OCI-LY7 (cell line): ENCODE measurements at regions of chr19 and their contacts with region 1.

Region 1: GRCh38 chr19:4791170-4792018 is at the start of gene FEM1A:
- DNase-seq: peak; percentile 100
- H3K4me3 ChIP-seq: peak within 1 kb of the TSS; percentile 84
- H3K27ac ChIP-seq: peak within 1 kb of the TSS; percentile 50
- H3K4me1 ChIP-seq: peaks cover 39% of the 10 kb centered on the region
- CTCF ChIP-seq: peak; percentile 99
- total RNA-seq, gene FEM1A: 11.5 and 17.5 TPM in 2 replicates

Region 2: GRCh38 chr19:4400135-4400936 is 391.1 kb before region 1 on chr19 and contains the start of gene SH3GL1:
- CTCF ChIA-PET with region 1: no interaction called
- POLR2A ChIA-PET with region 1: no interaction called
- intact Hi-C with region 1: loop called (anchors 10 kb)
- DNase-seq: peak; percentile 94
- H3K4me3 ChIP-seq: peak within 1 kb of the TSS; percentile 96
- H3K27ac ChIP-seq: peak within 1 kb of the TSS; percentile 69
- H3K4me1 ChIP-seq: peaks cover 38% of the 10 kb centered on the region
- CTCF ChIP-seq: peak; percentile 86
- total RNA-seq, gene SH3GL1: 24.3 and 33.2 TPM in 2 replicates

Region 3: GRCh38 chr19:4669723-4670480 is 121.5 kb before region 1 on chr19 and contains the start of gene MYDGF:
- CTCF ChIA-PET with region 1: no interaction called
- POLR2A ChIA-PET with region 1: no interaction called
- intact Hi-C with region 1: loop called (anchors 1 kb)
- DNase-seq: peak; percentile 93
- H3K4me3 ChIP-seq: peak within 1 kb of the TSS; percentile 97
- H3K27ac ChIP-seq: peak within 1 kb of the TSS; percentile 29
- H3K4me1 ChIP-seq: peaks cover 7% of the 10 kb centered on the region
- CTCF ChIP-seq: no peak
- total RNA-seq, gene MYDGF: 73.3 and 76.0 TPM in 2 replicates

Region 4: GRCh38 chr19:4713384-4713951 is 77.9 kb before region 1 on chr19:
- CTCF ChIA-PET with region 1: no interaction called
- POLR2A ChIA-PET with region 1: no interaction called
- intact Hi-C with region 1: no loop called
- DNase-seq: no peak
- H3K4me3 ChIP-seq: no peak overlapping the region
- H3K27ac ChIP-seq: no peak overlapping the region
- H3K4me1 ChIP-seq: no peaks in the 10 kb centered on the region
- CTCF ChIP-seq: no peak

Region 5: GRCh38 chr19:4723367-4724187 is 67.8 kb before region 1 on chr19 and contains the start of gene DPP9:
- CTCF ChIA-PET with region 1: interaction called, 5 read pairs
- POLR2A ChIA-PET with region 1: interaction called, 3 read pairs
- intact Hi-C with region 1: loop called (anchors 2 kb)
- DNase-seq: peak; percentile 100
- H3K4me3 ChIP-seq: peak within 1 kb of the TSS; percentile 100
- H3K27ac ChIP-seq: peak within 1 kb of the TSS; percentile 72
- H3K4me1 ChIP-seq: peaks cover 12% of the 10 kb centered on the region
- CTCF ChIP-seq: no peak
- total RNA-seq, gene DPP9: 25.5 and 40.2 TPM in 2 replicates

Region 6: DNA sequence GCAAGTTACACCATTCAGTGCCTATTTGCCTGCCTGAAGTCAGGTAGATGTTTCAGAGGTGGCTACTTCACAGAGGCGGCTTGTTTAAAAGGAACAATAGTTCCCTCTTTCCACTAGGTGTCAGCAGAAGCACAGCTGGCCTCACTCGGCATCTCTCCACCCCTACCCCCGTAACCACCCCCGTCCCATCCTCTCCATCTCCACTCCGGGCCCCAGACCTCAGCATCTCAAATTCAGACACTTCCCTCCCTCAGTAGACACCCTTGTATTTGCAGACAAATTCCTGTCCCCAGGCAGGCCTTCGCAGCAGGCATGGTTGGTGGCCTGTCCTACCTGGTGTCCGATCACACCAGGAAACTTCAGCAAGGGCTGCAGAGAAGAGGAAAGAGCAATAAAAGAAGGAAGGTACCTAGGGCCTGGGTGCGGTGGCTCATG is 58.7 kb before region 1 on chr19:
- CTCF ChIA-PET with region 1: interaction called, 7 read pairs
- POLR2A ChIA-PET with region 1: interaction called, 4 read pairs
- intact Hi-C with region 1: loop called (anchors 1 kb)
- DNase-seq: peak; percentile 85
- H3K4me3 ChIP-seq: no peak overlapping the region
- H3K27ac ChIP-seq: no peak overlapping the region
- H3K4me1 ChIP-seq: peaks cover 4% of the 10 kb centered on the region
- CTCF ChIP-seq: peak; percentile 88

Region 7: GRCh38 chr19:4861077-4861543 is 69.7 kb after region 1 on chr19:
- CTCF ChIA-PET with region 1: no interaction called
- POLR2A ChIA-PET with region 1: no interaction called
- intact Hi-C with region 1: no loop called
- DNase-seq: no peak
- H3K4me3 ChIP-seq: no peak overlapping the region
- H3K27ac ChIP-seq: no peak overlapping the region
- H3K4me1 ChIP-seq: peaks cover 36% of the 10 kb centered on the region
- CTCF ChIP-seq: no peak

Region 8: GRCh38 chr19:5695288-5696195 is 904.1 kb after region 1 on chr19:
- CTCF ChIA-PET with region 1: interaction called, 11 read pairs
- POLR2A ChIA-PET with region 1: no interaction called
- intact Hi-C with region 1: no loop called
- DNase-seq: no peak
- H3K4me3 ChIP-seq: no peak overlapping the region
- H3K27ac ChIP-seq: no peak overlapping the region
- H3K4me1 ChIP-seq: peaks cover 13% of the 10 kb centered on the region
- CTCF ChIP-seq: 0 out of 2 replicates have a peak, but pooled peaks have one; percentile 20